ENCODE measurements at regions of chr1 and their contacts with region 1.

Region 1: GRCh38 chr1:156129706-156130581 is 15.4 kb downstream of the LMNA start:
- DNase-seq: peak; percentile 91
- ATAC-seq: peak; percentile 65 to 68

Region 2: GRCh38 chr1:156096640-156097391 is 33.1 kb before region 1 on chr1:
- intact Hi-C with region 1: loop called (anchors 1 to 2 kb)
- DNase-seq: peak; percentile 93
- ATAC-seq: peak; percentile 95